ENCODE measurements at regions of chr9 and their contacts with region 1.

Region 1: DNA sequence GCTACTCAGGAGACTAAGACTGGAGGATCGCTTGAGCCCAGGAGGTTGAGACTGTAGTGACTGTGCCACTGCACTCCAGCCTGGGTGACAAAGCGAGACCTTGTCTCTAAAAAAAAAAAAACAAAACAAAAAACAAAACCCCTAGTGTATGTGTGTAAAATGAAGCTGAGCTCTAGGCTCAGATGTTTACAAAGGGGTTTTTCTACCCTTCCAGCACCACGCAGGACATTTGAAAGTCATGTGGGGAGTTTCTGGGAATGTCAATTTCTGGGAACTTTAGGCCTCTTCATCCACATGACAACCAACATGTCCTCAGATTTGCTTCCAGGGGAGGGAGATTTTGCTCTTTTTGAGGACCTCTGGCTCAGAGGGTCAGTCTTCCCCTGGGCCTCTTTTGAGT is 42.4 kb upstream of the AIF1L start:
- H3K4me3 ChIP-seq: no peak overlapping the region
- H3K27ac ChIP-seq: no peak overlapping the region
- H3K4me1 ChIP-seq: no peaks in the 10 kb centered on the region
- CTCF ChIP-seq: no peak

Region 2: GRCh38 chr9:131076347-131077195 is 22.7 kb after region 1 on chr9:
- CTCF ChIA-PET with region 1: interaction called, 14 read pairs
- POLR2A ChIA-PET with region 1: no interaction called
- H3K4me3 ChIP-seq: no peak overlapping the region
- H3K27ac ChIP-seq: no peak overlapping the region
- H3K4me1 ChIP-seq: no peaks in the 10 kb centered on the region
- CTCF ChIP-seq: no peak

Region 3: DNA sequence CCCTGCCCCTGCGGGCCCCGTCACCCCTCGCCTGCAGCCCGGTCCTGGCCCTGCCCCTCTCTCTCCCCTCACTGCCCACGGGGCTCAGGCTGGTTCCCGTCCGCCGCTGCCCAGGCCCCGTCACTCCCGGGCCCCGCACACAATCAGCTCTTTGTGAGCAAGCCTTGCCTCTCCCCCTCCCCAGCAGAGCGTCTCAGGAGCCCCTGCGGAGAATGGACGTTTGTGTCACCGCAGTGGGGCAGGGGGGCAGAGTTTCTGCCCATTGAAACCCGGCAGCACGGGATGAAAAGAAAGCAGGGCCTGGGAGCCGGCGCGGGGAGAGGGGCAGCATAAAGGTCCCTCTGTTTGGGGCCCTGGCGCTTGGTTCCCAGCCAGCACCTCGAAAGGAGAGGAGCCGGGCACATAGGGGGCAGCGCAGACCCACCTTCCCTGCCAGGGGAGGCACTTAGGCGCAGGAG is 58.0 kb after region 1 on chr9:
- CTCF ChIA-PET with region 1: interaction called, 15 read pairs
- POLR2A ChIA-PET with region 1: no interaction called
- H3K4me3 ChIP-seq: no peak overlapping the region
- H3K27ac ChIP-seq: no peak overlapping the region
- H3K4me1 ChIP-seq: no peaks in the 10 kb centered on the region
- CTCF ChIP-seq: no peak

Region 4: GRCh38 chr9:131125128-131126058 is 71.5 kb after region 1 on chr9 and contains the start of gene NUP214:
- CTCF ChIA-PET with region 1: interaction called, 6 read pairs
- POLR2A ChIA-PET with region 1: interaction called, 11 read pairs
- H3K4me3 ChIP-seq: peak within 1 kb of the TSS; percentile 84
- H3K27ac ChIP-seq: peak within 1 kb of the TSS; percentile 28
- H3K4me1 ChIP-seq: no peaks in the 10 kb centered on the region
- CTCF ChIP-seq: no peak

Region 5: DNA sequence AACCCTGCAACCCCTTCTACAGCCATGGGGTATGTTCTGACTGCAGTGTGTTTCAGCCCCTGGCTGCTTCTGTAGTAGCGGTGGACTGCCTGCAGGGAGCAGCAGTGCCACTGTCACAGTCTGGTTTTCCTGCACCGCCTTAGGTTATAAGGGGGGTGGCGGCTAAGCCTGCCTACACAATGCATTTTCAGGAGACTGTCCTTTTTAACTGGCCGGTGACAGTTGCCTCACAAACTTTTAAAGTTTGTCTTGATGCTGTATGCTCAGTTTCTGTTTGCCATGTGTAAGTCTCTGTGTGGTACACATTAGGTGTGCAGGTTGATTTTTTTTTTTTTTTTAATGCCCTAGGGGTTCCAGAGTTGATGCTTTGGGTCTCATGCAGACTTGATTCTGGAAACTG is 124.5 kb after region 1 on chr9:
- CTCF ChIA-PET with region 1: interaction called, 10 read pairs
- POLR2A ChIA-PET with region 1: no interaction called
- H3K4me3 ChIP-seq: no peak overlapping the region
- H3K27ac ChIP-seq: no peak overlapping the region
- H3K4me1 ChIP-seq: no peaks in the 10 kb centered on the region
- CTCF ChIP-seq: peak; percentile 72; the same call in 1 of the 2 replicates

Measured in HEK293 (cell line).